Mammary epithelial cell (primary cell): ENCODE measurements at regions of chr14 and their contacts with region 1.

Region 1: GRCh38 chr14:22099942-22100763 is 426.5 kb upstream of the OR4E1 start:
- DNase-seq: peak; percentile 72
- H3K4me3 ChIP-seq: no peak overlapping the region
- H3K27ac ChIP-seq: no peak overlapping the region
- H3K4me1 ChIP-seq: no peaks in the 10 kb centered on the region
- H3K27me3 ChIP-seq: no peaks in the 10 kb centered on the region
- CTCF ChIP-seq: peak; percentile 83 to 95

Region 2: GRCh38 chr14:21868442-21869046 is 231.6 kb before region 1 on chr14:
- CTCF ChIA-PET with region 1: no interaction called
- dilution Hi-C with region 1: no loop called
- in situ Hi-C with region 1: no loop called
- intact Hi-C with region 1: loop called (anchors 1 kb)
- DNase-seq: peak; percentile 73
- H3K4me3 ChIP-seq: no peak overlapping the region
- H3K27ac ChIP-seq: no peak overlapping the region
- H3K4me1 ChIP-seq: peaks cover 26% of the 10 kb centered on the region
- H3K27me3 ChIP-seq: no peaks in the 10 kb centered on the region
- CTCF ChIP-seq: peak; percentile 91 to 93

Region 3: DNA sequence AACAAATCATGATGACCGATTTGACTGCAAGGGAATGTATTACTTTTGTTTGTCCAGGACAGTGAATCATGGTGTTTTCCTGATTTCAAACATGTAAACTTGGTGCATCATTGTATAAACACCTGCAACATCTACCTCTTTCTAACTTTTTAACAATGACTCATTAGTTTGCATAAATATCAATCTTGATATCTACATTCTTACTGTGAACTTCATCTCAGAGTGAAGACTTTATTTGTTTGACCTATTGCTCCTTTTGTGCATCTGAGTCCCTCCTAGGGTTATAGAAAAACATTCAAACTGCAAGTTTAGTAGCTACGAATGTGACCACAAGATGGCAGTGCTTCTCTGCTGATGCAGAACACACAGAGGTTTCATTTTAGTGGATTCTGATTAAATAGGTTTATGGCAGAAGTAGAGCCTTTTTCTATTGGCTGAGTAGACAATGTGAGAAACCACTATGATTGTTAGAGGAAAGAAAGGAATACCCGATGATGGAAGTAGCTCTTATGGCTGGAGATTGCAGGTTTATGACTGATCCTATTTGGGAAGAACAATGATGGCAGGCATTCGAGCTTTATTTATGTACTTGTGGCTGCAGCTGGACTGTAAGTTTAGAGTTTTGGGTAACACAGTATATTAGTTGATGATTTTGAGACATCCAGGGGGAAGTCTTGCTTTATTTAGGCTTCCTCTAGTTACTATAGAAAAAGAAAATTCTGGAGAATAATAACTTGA is 182.3 kb before region 1 on chr14:
- CTCF ChIA-PET with region 1: interaction called, 3 read pairs
- dilution Hi-C with region 1: no loop called
- in situ Hi-C with region 1: no loop called
- intact Hi-C with region 1: loop called (anchors 5 kb)
- DNase-seq: peak; percentile 30
- H3K4me3 ChIP-seq: no peak overlapping the region
- H3K27ac ChIP-seq: no peak overlapping the region
- H3K4me1 ChIP-seq: no peaks in the 10 kb centered on the region
- H3K27me3 ChIP-seq: no peaks in the 10 kb centered on the region
- CTCF ChIP-seq: peak; percentile 80 to 88

Region 4: DNA sequence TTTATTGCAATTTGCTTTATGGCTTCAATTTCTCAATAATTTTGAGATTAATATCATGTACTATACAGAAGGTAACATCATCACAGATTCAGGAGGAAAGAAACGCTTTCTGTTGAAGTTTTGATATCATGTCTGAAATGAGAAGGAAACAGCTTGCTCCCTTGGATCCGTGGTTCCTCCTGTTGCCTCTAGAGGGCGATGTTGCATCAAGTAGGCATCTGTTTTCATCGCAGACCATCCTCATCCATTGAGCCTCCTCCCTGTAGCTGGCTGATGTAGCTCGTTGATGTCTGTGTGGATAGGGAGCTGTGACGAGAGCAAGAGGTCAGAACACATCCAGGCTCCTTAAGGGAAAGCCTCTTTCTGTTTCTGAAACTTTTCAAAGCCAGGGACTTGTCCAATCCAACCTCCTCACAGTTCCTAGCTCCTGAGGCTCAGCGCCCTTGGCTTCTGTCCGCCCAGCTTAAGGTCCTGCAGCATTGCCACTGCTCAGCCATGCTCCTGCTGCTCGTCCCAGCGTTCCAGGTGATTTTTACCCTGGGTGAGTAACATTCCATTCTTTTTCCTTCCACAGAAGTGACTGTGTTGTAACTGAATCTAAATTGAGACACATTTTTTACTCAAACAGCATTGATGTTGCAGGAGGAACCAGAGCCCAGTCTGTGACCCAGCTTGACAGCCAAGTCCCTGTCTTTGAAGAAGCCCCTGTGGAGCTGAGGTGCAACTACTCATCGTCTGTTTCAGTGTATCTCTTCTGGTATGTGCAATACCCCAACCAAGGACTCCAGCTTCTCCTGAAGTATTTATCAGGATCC is 121.8 kb before region 1 on chr14:
- CTCF ChIA-PET with region 1: no interaction called
- dilution Hi-C with region 1: no loop called
- in situ Hi-C with region 1: loop called in 1 of 2 experiments (anchors 25 kb)
- intact Hi-C with region 1: no loop called
- DNase-seq: peak; percentile 16
- H3K4me3 ChIP-seq: no peak overlapping the region
- H3K27ac ChIP-seq: no peak overlapping the region
- H3K4me1 ChIP-seq: no peaks in the 10 kb centered on the region
- H3K27me3 ChIP-seq: no peaks in the 10 kb centered on the region
- CTCF ChIP-seq: peak; percentile 89 to 94

Region 5: DNA sequence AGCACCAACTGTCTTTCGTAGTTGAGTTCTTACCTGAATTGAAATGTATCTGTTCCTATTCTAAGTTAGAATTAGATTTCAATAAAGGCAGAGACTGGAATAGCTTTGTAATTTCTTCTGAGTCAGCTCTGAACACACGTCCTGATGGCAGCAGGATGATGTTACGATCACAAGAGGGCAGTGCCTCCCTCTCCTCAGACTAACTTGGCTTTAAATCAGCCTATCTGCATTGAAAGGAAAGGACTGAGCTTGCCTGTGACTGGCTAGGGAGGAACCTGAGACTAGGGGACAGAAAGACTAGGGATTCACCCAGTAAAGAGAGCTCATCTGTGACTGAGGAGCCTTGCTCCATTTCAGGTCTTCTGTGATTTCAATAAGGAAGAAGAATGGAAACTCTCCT is 102.9 kb before region 1 on chr14:
- CTCF ChIA-PET with region 1: interaction called, 5 read pairs
- dilution Hi-C with region 1: no loop called
- in situ Hi-C with region 1: loop called in 1 of 2 experiments (anchors 25 kb)
- intact Hi-C with region 1: loop called (anchors 5 kb)
- DNase-seq: peak; percentile 38
- H3K4me3 ChIP-seq: no peak overlapping the region
- H3K27ac ChIP-seq: no peak overlapping the region
- H3K4me1 ChIP-seq: no peaks in the 10 kb centered on the region
- H3K27me3 ChIP-seq: no peaks in the 10 kb centered on the region
- CTCF ChIP-seq: peak; percentile 17 to 54

Region 6: DNA sequence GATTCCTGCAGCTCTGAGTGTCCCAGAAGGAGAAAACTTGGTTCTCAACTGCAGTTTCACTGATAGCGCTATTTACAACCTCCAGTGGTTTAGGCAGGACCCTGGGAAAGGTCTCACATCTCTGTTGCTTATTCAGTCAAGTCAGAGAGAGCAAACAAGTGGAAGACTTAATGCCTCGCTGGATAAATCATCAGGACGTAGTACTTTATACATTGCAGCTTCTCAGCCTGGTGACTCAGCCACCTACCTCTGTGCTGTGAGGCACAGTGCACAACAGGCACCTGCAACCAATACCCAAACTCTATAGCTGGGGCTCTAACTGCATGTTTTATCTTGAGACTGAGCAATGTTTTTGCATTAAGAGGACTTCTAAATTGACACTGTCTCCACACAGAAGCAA is 47.4 kb before region 1 on chr14:
- CTCF ChIA-PET with region 1: no interaction called
- dilution Hi-C with region 1: no loop called
- in situ Hi-C with region 1: no loop called
- intact Hi-C with region 1: no loop called
- DNase-seq: no peak
- H3K4me3 ChIP-seq: no peak overlapping the region
- H3K27ac ChIP-seq: no peak overlapping the region
- H3K4me1 ChIP-seq: no peaks in the 10 kb centered on the region
- H3K27me3 ChIP-seq: peaks cover 6% of the 10 kb centered on the region
- CTCF ChIP-seq: no peak

Region 7: DNA sequence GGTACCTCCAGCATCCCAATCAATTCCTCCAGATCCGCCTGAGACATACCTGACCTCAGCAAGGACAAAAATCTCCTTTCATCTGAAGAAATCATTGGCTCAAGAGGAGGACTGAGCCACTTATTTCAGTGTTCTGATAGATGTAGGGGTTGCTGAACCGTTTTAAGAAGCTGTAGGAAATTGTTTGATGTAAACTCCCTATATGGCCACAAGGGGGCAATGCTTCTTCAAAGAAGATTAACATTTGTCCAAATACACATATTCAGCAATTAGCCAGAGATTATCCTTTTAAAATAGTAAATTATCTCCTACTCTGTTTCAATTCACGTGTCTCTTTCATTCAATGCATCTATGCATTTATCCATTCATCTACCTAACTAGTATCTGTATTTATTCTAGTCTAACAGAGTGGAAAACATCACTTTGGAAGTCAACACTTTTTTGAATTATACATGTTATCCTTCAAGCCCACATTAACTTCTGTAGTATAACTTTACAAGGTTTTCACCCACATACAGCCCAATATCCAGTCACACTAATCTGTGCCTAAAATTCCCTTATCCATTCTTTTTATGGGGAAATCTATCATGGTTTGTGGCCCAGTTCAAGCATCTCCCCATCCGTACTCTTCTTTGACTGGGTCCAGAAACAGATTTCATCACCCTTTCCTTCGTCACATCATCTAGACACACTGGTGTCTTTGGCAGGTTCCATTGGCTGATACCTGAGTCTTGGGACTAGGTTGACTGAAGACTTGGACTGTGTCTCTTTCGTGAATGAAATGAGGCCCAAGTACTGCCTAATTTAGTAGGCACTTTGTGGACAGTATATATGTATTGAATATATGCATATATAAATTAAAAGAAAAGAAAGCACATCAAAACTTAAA is 15.5 kb before region 1 on chr14:
- CTCF ChIA-PET with region 1: interaction called, 6 read pairs
- dilution Hi-C with region 1: no loop called
- in situ Hi-C with region 1: no loop called
- intact Hi-C with region 1: loop called (anchors 1 kb)
- DNase-seq: peak; percentile 39
- H3K4me3 ChIP-seq: no peak overlapping the region
- H3K27ac ChIP-seq: no peak overlapping the region
- H3K4me1 ChIP-seq: no peaks in the 10 kb centered on the region
- H3K27me3 ChIP-seq: no peaks in the 10 kb centered on the region
- CTCF ChIP-seq: peak; percentile 65 to 76